ENCODE measurements at regions of chr10 and their contacts with region 1.

Region 1: DNA sequence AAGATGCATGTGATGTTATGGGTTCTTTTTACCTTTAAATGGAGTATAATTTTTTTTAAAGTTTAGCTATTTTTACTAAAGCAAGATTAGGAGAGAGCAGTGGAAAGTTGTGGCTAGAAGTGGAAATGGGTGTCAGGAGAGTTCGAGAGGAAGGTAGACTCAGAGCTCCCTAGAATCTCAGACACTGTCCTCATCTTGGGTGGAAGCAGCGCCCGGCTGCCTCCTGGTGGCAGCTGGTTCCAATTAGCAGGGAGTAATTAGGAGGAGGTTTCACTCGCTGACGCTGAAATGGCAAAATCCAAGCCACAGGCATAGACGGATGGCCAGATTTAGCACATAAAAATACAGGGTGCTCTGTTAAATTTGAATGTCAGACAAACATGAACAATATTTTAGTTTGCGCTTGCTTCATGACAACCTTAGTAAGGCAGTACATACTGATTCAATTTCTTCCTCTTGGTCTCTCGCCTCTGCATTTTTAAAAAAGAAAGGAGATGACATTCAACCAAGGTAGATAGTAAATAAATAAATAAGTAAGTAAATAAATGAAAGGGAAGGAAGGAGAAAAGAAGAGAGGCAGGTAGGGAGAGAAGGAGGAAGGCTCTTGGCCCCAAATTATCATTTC is 58.5 kb downstream of the LGI1 start:
- DNase-seq: no peak
- ATAC-seq: peak; percentile 89
- H3K4me3 ChIP-seq: no peak overlapping the region
- H3K27ac ChIP-seq: no peak overlapping the region
- H3K4me1 ChIP-seq: peaks cover 6% of the 10 kb centered on the region; the same call in 1 of the 2 replicates
- H3K27me3 ChIP-seq: peaks cover 15% of the 10 kb centered on the region
- CTCF ChIP-seq: peak; percentile 97

Region 2: GRCh38 chr10:93062514-93063143 is 753.6 kb before region 1 on chr10:
- CTCF ChIA-PET with region 1: no interaction called
- POLR2A ChIA-PET with region 1: no interaction called
- in situ Hi-C with region 1: no loop called
- intact Hi-C with region 1: no loop called
- DNase-seq: no peak
- ATAC-seq: peak; percentile 84
- H3K4me3 ChIP-seq: peak overlapping the region; percentile 55 to 73
- H3K27ac ChIP-seq: peak overlapping the region; percentile 60
- H3K4me1 ChIP-seq: peaks cover 9% of the 10 kb centered on the region; the same call in 1 of the 2 replicates
- H3K27me3 ChIP-seq: peaks cover 20% of the 10 kb centered on the region
- CTCF ChIP-seq: peak; percentile 98

Region 3: GRCh38 chr10:93554760-93555432 is 261.3 kb before region 1 on chr10:
- CTCF ChIA-PET with region 1: interaction called, 8 read pairs
- POLR2A ChIA-PET with region 1: no interaction called
- in situ Hi-C with region 1: no loop called
- intact Hi-C with region 1: loop called (anchors 10 kb)
- DNase-seq: peak; percentile 53
- ATAC-seq: peak; percentile 96
- H3K4me3 ChIP-seq: no peak overlapping the region
- H3K27ac ChIP-seq: no peak overlapping the region
- H3K4me1 ChIP-seq: no peaks in the 10 kb centered on the region
- H3K27me3 ChIP-seq: no peaks in the 10 kb centered on the region
- CTCF ChIP-seq: peak; percentile 91

Region 4: GRCh38 chr10:93566435-93567276 is 249.6 kb before region 1 on chr10 and contains the start of gene FFAR4:
- CTCF ChIA-PET with region 1: interaction called, 15 read pairs
- POLR2A ChIA-PET with region 1: no interaction called
- in situ Hi-C with region 1: no loop called
- intact Hi-C with region 1: no loop called
- DNase-seq: no peak
- ATAC-seq: peak; percentile 76
- H3K4me3 ChIP-seq: peak within 1 kb of the TSS; percentile 39 to 55
- H3K27ac ChIP-seq: no peak within 1 kb of the TSS
- H3K4me1 ChIP-seq: peaks cover 10% of the 10 kb centered on the region
- H3K27me3 ChIP-seq: peaks cover 34% of the 10 kb centered on the region
- CTCF ChIP-seq: no peak
- total RNA-seq, gene FFAR4: 0.92 TPM

Region 5: GRCh38 chr10:93702211-93703001 is 113.8 kb before region 1 on chr10 and contains the start of gene FRA10AC1:
- CTCF ChIA-PET with region 1: interaction called, 9 read pairs
- POLR2A ChIA-PET with region 1: no interaction called
- in situ Hi-C with region 1: no loop called
- intact Hi-C with region 1: loop called (anchors 2 kb)
- DNase-seq: peak; percentile 47
- ATAC-seq: peak; percentile 98
- H3K4me3 ChIP-seq: peak within 1 kb of the TSS; percentile 58 to 85
- H3K27ac ChIP-seq: peak within 1 kb of the TSS; percentile 91
- H3K4me1 ChIP-seq: peaks cover 9% of the 10 kb centered on the region; the same call in 1 of the 2 replicates
- H3K27me3 ChIP-seq: no peaks in the 10 kb centered on the region; the same call in 1 of the 2 replicates
- CTCF ChIP-seq: peak; percentile 74
- total RNA-seq, gene FRA10AC1: 20.3 TPM

Region 6: DNA sequence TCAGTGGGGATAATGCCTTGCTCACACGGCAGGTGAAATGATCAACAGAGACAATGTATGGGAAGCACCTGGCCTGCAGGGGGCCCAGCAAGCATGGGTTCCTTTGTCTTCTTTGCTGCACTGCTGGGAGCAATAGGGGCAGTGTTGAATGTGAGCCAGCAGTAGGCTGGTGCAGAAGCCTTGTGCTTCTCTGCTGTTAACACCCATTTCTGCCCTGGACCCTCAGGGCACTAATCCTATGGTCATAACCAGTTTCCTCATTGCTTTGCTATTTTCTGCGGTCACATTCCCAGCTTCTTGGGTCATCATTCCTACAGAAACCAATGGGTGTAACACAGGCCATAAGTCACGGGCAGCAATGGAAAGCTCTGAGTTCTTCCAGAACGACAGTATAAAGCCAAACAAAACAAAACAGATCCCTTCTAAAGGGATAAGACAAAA is 69.4 kb before region 1 on chr10:
- CTCF ChIA-PET with region 1: interaction called, 51 read pairs
- POLR2A ChIA-PET with region 1: no interaction called
- in situ Hi-C with region 1: no loop called
- intact Hi-C with region 1: loop called (anchors 1 kb)
- DNase-seq: peak; percentile 92
- ATAC-seq: peak; percentile 91
- H3K4me3 ChIP-seq: no peak overlapping the region
- H3K27ac ChIP-seq: no peak overlapping the region
- H3K4me1 ChIP-seq: peaks cover 17% of the 10 kb centered on the region
- H3K27me3 ChIP-seq: no peaks in the 10 kb centered on the region
- CTCF ChIP-seq: peak; percentile 77

Region 7: GRCh38 chr10:93859049-93859655 is 42.9 kb after region 1 on chr10:
- CTCF ChIA-PET with region 1: no interaction called
- POLR2A ChIA-PET with region 1: no interaction called
- in situ Hi-C with region 1: no loop called
- intact Hi-C with region 1: loop called (anchors 5 kb)
- DNase-seq: no peak
- ATAC-seq: 0 out of 2 replicates have a peak, but pooled peaks have one; percentile 62
- H3K4me3 ChIP-seq: no peak overlapping the region
- H3K27ac ChIP-seq: no peak overlapping the region
- H3K4me1 ChIP-seq: no peaks in the 10 kb centered on the region
- H3K27me3 ChIP-seq: no peaks in the 10 kb centered on the region; the same call in 1 of the 2 replicates
- CTCF ChIP-seq: peak; percentile 76

Region 8: DNA sequence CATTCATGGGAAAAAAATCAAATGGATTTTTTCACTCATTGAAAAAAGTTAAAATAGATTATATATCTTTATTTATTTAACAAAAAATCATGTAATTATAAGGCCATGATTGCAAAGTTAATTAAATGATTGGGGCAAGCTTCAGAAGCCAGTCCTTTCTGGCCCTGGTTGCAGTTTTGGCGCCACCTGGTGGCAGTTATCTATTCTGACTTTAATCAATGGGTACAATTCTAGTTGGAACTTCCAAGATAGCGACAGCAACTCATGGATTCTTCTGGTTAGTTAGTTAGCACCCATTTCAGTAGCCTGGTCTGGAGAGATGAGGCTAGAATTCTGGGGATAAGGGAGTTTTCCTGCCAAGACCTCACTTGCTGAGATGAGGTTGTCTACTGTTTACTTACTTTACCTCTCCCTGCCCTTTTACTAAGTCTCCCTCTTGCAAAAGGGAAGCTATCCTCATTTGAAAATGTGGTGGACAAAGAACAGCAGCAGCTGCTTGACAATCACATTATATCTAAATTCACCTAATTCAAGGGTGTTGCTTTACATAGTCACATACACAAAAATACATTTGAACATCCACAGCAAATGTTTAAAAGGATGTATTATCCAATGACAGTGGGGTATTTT is 504.2 kb after region 1 on chr10:
- CTCF ChIA-PET with region 1: interaction called, 17 read pairs
- POLR2A ChIA-PET with region 1: no interaction called
- in situ Hi-C with region 1: no loop called
- intact Hi-C with region 1: loop called (anchors 5 kb)
- DNase-seq: peak; percentile 60
- ATAC-seq: peak; percentile 74
- H3K4me3 ChIP-seq: no peak overlapping the region
- H3K27ac ChIP-seq: no peak overlapping the region
- H3K4me1 ChIP-seq: no peaks in the 10 kb centered on the region
- H3K27me3 ChIP-seq: no peaks in the 10 kb centered on the region
- CTCF ChIP-seq: peak; percentile 96

Measured in Panc1 (cell line).